GM10248 (cell line): ENCODE measurements at regions of chr15 and their contacts with region 1.

Region 1: GRCh38 chr15:40857601-40858341 is 13.9 kb downstream of the SPINT1 start:
- DNase-seq: peak; percentile 89
- CTCF ChIP-seq: peak; percentile 97

Region 2: GRCh38 chr15:40763801-40764732 is 93.7 kb before region 1 on chr15 and contains the start of gene GCHFR:
- CTCF ChIA-PET with region 1: interaction called, 12 read pairs
- POLR2A ChIA-PET with region 1: no interaction called
- DNase-seq: peak; percentile 89
- CTCF ChIP-seq: peak; percentile 37

Region 3: DNA sequence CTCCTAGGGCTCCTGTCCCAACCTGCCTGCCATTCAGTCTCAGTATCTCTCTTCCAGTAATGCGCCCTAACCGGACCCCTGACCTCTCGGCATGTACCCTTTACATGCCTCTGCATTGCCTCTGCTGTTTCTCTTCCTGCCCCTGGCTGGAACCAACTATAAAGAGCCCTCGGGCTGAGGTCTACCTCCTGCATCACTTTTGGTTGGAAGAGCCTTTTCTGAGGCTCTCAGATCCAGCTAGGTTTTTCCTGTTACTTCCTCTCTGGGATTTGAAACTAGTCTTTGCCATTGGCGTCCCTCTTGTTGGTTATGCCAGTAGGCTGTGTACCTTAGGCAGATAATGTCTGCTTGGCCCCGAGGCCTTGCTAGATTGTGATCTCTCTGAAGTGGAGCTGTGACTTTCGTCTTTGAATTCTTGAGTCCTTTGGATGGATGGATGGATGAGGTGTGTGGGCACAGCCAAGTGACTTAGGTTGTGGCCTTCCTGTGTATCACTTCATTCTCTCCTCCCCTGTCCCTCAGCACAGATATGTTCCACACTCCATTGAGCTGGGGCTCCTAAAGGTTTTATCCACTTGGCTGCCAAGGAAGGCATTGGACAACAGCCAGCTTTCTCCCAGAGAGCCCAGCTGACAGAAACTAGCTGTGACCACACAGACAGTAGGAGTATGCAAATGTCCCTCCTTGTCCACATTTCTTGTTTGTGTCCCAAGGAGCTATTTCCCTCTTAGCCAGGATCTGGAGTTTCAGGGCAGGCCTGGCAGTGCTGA is 42.7 kb before region 1 on chr15:
- CTCF ChIA-PET with region 1: interaction called, 31 read pairs
- POLR2A ChIA-PET with region 1: no interaction called
- DNase-seq: no peak
- CTCF ChIP-seq: no peak

Region 4: GRCh38 chr15:40873625-40874561 is 16.1 kb after region 1 on chr15 and contains the start of gene RHOV:
- CTCF ChIA-PET with region 1: no interaction called
- POLR2A ChIA-PET with region 1: interaction called, 16 read pairs
- DNase-seq: peak; percentile 84
- CTCF ChIP-seq: peak; percentile 68

Region 5: GRCh38 chr15:40900256-40901052 is 42.7 kb after region 1 on chr15:
- CTCF ChIA-PET with region 1: no interaction called
- POLR2A ChIA-PET with region 1: no interaction called
- DNase-seq: no peak
- CTCF ChIP-seq: no peak

Region 6: GRCh38 chr15:41180206-41180789 is 322.5 kb after region 1 on chr15:
- CTCF ChIA-PET with region 1: interaction called, 16 read pairs
- POLR2A ChIA-PET with region 1: no interaction called
- DNase-seq: no peak
- CTCF ChIP-seq: no peak